ENCODE measurements at regions of chr4 and their contacts with region 1.

Region 1: DNA sequence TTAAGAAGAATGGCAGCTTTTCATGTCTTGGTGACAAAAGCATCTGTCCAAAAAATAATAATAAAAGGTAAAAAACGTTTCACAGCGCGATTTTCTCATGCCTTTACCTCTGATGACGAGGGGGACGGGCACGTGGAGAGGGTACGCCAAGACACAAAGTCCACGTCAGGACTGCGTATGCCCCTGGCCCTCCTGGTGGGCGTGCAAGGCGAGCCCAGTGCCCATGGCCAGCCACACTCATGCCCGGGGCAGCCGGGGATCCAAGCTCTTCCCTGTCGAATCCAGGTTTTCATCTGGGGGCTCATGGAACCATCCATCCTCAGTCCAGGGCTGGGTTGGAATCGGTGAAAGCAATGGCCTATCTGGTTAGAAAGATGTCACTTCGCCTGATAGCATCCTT is 176.6 kb downstream of the AFAP1 start:
- DNase-seq: no peak
- ATAC-seq: no peak
- H3K4me3 ChIP-seq: no peak overlapping the region
- H3K4me3 Mint-ChIP-seq: no peak overlapping the region
- H3K27ac ChIP-seq: no peak overlapping the region
- H3K27ac Mint-ChIP-seq: no peak overlapping the region
- H3K4me1 ChIP-seq: peaks cover 16 to 39% of the 10 kb centered on the region in 2 experiments
- H3K4me1 Mint-ChIP-seq: peaks cover 12 to 31% (median 30%) of the 10 kb centered on the region in 3 donors
- H3K27me3 ChIP-seq: no peaks in the 10 kb centered on the region
- H3K27me3 Mint-ChIP-seq: no peaks in the 10 kb centered on the region

Region 2: DNA sequence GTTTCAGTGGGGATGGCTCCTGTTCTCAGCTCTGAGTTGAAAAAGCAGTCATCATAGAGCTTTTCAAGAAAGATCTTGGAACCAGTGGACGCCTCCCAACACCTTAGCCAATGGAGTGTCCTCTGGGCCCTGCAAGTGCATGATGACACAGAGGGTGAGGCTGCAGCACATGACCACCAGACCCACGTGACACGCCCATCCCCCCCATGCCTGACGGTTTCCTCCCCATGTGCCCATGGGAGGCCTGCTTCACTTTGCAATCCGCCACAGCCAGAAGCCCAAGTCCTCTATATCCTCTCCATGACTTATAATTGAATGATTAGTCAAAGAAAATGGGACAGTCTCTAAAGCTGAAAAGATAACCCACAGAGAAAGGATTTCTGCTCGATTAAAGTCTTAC is 10.5 kb before region 1 on chr4:
- CTCF ChIA-PET with region 1: no interaction called
- POLR2A ChIA-PET with region 1: no interaction called
- DNase-seq: no peak
- ATAC-seq: no peak
- H3K4me3 ChIP-seq: no peak overlapping the region
- H3K4me3 Mint-ChIP-seq: no peak overlapping the region
- H3K27ac ChIP-seq: no peak overlapping the region
- H3K27ac Mint-ChIP-seq: no peak overlapping the region
- H3K4me1 ChIP-seq: peaks cover 3 to 9% of the 10 kb centered on the region in 2 experiments
- H3K4me1 Mint-ChIP-seq: peaks cover 13 to 27% (median 17%) of the 10 kb centered on the region in 3 donors
- H3K27me3 ChIP-seq: peaks cover 0 to 2% of the 10 kb centered on the region in 2 experiments
- H3K27me3 Mint-ChIP-seq: no peaks in the 10 kb centered on the region

Region 3: GRCh38 chr4:8938623-8939022 is 1175.5 kb after region 1 on chr4:
- CTCF ChIA-PET with region 1: interaction called in 1 of 2 experiments, 13 read pairs
- POLR2A ChIA-PET with region 1: no interaction called
- DNase-seq: no peak
- ATAC-seq: no peak
- H3K4me3 ChIP-seq: no peak overlapping the region
- H3K4me3 Mint-ChIP-seq: no peak overlapping the region
- H3K27ac ChIP-seq: no peak overlapping the region
- H3K27ac Mint-ChIP-seq: no peak overlapping the region
- H3K4me1 ChIP-seq: no peaks in the 10 kb centered on the region
- H3K4me1 Mint-ChIP-seq: peaks cover 0 to 5% (median 0%) of the 10 kb centered on the region in 3 donors
- H3K27me3 ChIP-seq: peaks cover 0 to 2% of the 10 kb centered on the region in 2 experiments
- H3K27me3 Mint-ChIP-seq: peaks cover 5 to 6% of the 10 kb centered on the region in 2 donors